ENCODE measurements at regions of chr22 and their contacts with region 1.

Region 1: GRCh38 chr22:46576556-46577367 is 39.3 kb upstream of the CELSR1 start:
- DNase-seq: no peak

Region 2: DNA sequence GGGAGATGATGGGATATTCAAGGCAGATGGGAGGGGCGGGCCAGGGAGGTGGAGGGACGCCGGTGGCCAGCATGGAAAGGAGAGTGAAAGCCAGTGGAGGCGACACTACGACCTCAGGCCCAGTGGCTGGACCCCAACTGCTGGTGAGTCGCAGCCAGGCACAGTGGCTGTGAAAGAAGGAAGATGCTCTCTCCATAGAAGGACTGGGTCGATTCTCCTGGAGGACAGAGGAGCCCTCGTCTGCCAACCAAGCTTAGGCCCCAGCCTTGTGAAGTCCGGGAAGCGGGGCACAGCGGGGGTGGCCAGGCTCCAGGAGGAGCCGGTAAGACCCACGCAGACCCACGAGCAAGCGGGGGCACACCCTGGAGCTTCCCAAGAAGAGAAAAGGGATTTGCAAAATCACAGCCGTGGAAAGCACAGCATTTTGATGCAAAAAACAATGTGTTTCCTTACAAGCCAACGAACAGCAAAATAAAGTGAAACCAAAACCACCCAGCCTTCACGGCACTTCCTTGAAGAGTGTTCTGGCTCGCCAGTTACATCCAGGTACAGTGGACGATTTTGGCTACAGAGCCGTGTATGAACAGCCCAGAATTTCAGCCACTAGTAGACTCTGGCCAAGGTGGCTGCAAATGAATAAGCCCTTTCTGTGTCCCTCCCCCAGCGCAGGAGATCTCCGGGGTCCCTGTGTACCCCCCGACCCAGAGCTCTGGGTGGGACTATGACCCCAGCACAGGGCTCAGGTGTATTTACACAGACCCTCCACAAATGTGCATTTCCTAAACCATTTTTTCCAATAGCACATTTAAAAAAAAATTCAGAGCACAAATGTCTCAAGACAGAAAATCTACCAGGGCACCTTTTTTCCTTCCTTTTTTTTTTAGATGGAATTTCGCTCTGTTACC is 144.3 kb before region 1 on chr22:
- intact Hi-C with region 1: no loop called
- DNase-seq: no peak

Region 3: DNA sequence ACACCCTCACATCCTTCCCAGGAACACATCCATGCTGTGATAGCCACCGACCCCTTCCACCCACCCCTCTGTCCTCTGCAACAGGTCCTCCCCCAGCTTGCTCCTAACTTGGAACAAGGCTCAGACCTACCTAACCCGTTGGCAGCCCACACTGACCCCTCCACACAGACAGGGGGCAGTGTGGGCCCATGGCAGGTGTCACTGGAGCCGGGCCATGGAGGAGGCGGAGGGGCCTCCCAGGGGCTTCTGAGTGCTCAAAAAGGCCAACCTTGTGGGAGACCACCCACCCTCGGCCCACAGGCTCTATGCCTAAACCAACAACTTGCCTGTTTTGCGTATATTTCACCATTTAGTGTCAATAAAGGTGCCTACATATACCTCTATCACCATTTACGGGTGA is 104.2 kb after region 1 on chr22:
- intact Hi-C with region 1: loop called (anchors 5 kb)
- DNase-seq: no peak

Region 4: GRCh38 chr22:46737976-46738646 is 161.3 kb after region 1 on chr22 and contains the start of gene CERK:
- intact Hi-C with region 1: loop called (anchors 5 kb)
- DNase-seq: peak; percentile 93
- total RNA-seq, gene CERK: 60.0 TPM

Region 5: DNA sequence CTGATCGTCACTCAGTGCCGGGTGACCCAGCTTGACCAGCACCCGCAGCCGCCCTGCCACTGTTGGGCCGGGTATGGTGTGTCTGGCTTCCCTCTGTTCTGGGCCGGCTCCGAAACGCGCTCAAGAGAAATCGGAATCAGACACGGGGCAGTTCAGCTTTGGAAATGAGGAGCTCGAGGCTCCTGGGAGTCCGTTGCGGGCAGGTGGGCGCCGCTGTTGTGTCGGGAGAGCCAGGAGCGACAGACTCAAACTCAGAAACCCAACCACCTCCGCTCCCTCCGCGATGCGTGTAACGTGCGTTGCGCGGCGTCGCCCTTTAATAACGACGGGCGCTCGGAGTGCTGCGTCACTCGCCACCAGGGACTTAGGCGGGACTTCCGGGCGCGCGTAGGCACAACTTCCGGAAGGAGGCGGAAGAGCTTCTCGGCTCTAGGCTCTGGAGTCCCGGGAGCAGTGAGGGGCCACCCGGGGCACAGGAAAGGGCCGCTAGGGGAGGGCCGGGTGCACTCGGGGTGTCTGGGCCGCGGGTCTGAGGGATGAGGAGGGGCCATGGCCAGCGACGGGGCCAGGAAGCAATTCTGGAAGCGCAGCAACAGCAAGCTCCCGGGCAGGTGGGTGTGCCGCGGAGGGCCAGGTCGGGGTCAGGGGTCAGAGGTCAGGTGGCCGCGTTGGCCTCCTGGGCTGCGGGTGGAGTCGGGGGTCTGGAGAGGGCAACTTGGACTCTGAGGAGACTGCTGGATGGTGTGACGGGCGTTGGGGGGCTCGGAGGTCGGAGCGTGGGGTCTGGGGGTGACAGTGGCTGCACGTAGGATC is 185.7 kb after region 1 on chr22 and contains the start of gene TBC1D22A:
- intact Hi-C with region 1: loop called (anchors 5 kb)
- DNase-seq: peak; percentile 97
- total RNA-seq, gene TBC1D22A: 20.1 TPM